Activated CD4-positive, alpha-beta memory T cell treated with anti-CD3 and anti-CD28 coated beads for 36 hours (primary cell): ENCODE measurements at regions of chr4 and their contacts with region 1.

Region 1: GRCh38 chr4:113823291-113823659 is 61.7 kb upstream of the CAMK2D start:
- DNase-seq: peak; percentile 18
- H3K4me3 Mint-ChIP-seq: no peak overlapping the region
- H3K27ac Mint-ChIP-seq: no peak overlapping the region
- H3K4me1 Mint-ChIP-seq: peaks cover 45% of the 10 kb centered on the region
- H3K27me3 Mint-ChIP-seq: no peaks in the 10 kb centered on the region

Region 2: DNA sequence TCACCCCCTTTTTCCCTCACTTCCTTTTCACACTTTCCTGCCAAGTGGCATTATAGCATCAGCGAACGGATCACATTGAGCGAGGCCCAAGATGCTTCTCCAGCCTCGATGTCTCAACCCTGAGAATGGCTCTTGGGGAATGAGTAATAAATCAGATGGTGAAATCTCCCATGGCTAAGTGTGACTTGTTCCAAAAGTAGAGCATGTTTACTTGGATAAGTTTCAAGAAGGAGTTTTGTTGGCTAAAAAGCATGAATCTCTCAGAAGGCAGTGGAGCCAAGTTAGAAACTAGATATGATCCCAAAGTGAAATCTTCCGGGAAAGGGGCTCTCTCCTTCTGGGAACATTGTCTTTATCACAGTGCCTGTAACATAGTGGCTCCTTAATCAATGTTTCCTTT is 378.0 kb before region 1 on chr4:
- CTCF ChIA-PET with region 1: no interaction called
- POLR2A ChIA-PET with region 1: no interaction called
- intact Hi-C with region 1: loop called (anchors 5 kb)
- DNase-seq: peak; percentile 19
- H3K4me3 Mint-ChIP-seq: no peak overlapping the region
- H3K27ac Mint-ChIP-seq: peak overlapping the region; percentile 64
- H3K4me1 Mint-ChIP-seq: peaks cover 26% of the 10 kb centered on the region
- H3K27me3 Mint-ChIP-seq: no peaks in the 10 kb centered on the region

Region 3: GRCh38 chr4:113738251-113738650 is 85.0 kb before region 1 on chr4:
- CTCF ChIA-PET with region 1: no interaction called
- POLR2A ChIA-PET with region 1: no interaction called
- intact Hi-C with region 1: no loop called
- DNase-seq: no peak
- H3K4me3 Mint-ChIP-seq: no peak overlapping the region
- H3K27ac Mint-ChIP-seq: no peak overlapping the region
- H3K4me1 Mint-ChIP-seq: peaks cover 47% of the 10 kb centered on the region
- H3K27me3 Mint-ChIP-seq: no peaks in the 10 kb centered on the region

Region 4: GRCh38 chr4:113781439-113782040 is 41.7 kb before region 1 on chr4:
- CTCF ChIA-PET with region 1: no interaction called
- POLR2A ChIA-PET with region 1: interaction called, 3 read pairs
- intact Hi-C with region 1: loop called (anchors 5 kb)
- DNase-seq: no peak
- H3K4me3 Mint-ChIP-seq: no peak overlapping the region
- H3K27ac Mint-ChIP-seq: no peak overlapping the region
- H3K4me1 Mint-ChIP-seq: peaks cover 16% of the 10 kb centered on the region
- H3K27me3 Mint-ChIP-seq: no peaks in the 10 kb centered on the region

Region 5: GRCh38 chr4:113869743-113870375 is 46.6 kb after region 1 on chr4:
- CTCF ChIA-PET with region 1: no interaction called
- POLR2A ChIA-PET with region 1: no interaction called
- intact Hi-C with region 1: loop called (anchors 2 kb)
- DNase-seq: peak; percentile 66
- H3K4me3 Mint-ChIP-seq: no peak overlapping the region
- H3K27ac Mint-ChIP-seq: peak overlapping the region; percentile 76
- H3K4me1 Mint-ChIP-seq: peaks cover 11% of the 10 kb centered on the region
- H3K27me3 Mint-ChIP-seq: no peaks in the 10 kb centered on the region

Region 6: DNA sequence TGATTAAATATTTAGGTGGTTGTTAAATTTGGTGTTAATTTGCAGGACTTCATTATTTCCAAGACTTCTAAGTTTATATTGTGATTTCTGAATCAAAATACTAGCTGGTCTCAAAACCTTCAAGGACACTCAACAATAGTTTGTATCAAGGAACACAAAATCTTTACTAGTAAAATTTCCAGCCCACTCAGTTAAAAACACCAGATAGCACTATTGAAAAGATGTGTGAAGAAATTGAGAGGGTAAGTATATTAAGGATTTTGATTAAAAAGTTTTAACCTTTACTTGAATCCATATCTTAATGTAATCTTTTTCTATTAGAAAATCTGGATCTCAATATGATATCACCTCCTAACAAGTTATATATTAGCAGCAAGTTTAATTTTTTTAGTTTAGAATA is 686.1 kb after region 1 on chr4:
- CTCF ChIA-PET with region 1: no interaction called
- POLR2A ChIA-PET with region 1: no interaction called
- intact Hi-C with region 1: no loop called
- DNase-seq: no peak
- H3K4me3 Mint-ChIP-seq: no peak overlapping the region
- H3K27ac Mint-ChIP-seq: no peak overlapping the region
- H3K4me1 Mint-ChIP-seq: no peaks in the 10 kb centered on the region
- H3K27me3 Mint-ChIP-seq: peaks cover 1% of the 10 kb centered on the region

Region 7: GRCh38 chr4:114519368-114519767 is 696.1 kb after region 1 on chr4:
- CTCF ChIA-PET with region 1: no interaction called
- POLR2A ChIA-PET with region 1: no interaction called
- intact Hi-C with region 1: no loop called
- DNase-seq: no peak
- H3K4me3 Mint-ChIP-seq: no peak overlapping the region
- H3K27ac Mint-ChIP-seq: no peak overlapping the region
- H3K4me1 Mint-ChIP-seq: no peaks in the 10 kb centered on the region
- H3K27me3 Mint-ChIP-seq: no peaks in the 10 kb centered on the region